CD4-positive, alpha-beta memory T cell (primary cell): ENCODE measurements at regions of chr19 and their contacts with region 1.

Region 1: DNA sequence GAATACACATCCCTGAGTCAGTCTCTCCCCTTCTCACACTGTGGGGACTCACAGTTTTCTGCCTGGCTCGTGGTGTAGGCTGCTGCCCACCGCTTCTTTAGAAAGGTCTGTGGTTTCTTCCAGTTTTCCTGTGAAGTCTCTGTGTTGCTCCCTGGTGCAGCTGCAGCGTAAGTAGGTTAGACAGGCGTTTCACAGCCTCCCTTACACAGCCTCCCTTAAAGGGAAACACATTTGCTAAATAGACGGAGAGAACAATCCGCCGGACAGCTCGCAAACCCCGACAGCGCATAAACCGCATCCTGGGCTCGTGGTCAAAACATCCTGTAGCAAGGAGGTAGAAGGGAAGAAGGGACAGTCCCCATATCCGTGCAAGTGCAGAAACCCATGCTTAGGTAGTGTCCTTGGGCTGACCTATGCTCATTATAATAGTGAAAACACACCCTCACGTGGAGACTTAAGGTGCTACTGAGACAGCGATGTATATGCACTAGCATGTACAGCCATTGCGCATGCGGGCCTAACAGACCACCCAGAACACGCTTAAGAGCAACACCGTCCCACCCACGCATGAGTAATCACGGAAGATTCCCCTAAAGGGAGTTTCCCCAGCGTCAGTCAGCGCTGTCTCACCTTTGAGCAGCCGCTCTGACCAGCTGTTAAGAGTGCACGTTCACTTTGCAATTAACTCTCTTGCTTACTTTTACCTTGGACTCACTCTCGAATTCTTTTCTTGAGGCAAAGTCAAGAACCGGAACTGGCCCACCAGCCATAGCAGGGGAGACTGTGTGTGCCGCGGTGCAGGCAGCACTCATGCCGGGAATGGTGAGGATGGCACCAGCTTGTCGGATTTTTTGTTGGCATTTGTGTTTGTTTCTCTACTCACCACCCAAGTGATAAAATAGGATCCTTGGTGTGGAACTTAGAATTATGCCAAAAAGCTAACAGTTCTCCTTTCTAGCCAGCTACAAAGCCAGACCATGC is 16.6 kb downstream of the SIGLEC8 start:
- DNase-seq: peak; percentile 81 to 95 (median 85)
- H3K4me3 ChIP-seq: peak overlapping the region; percentile 17 to 36
- H3K4me3 Mint-ChIP-seq: peak overlapping the region; percentile 73 to 91 (median 84)
- H3K27ac ChIP-seq: peak overlapping the region; percentile 70
- H3K27ac Mint-ChIP-seq: peak overlapping the region; percentile 85 to 98 (median 94)
- H3K4me1 ChIP-seq: peaks cover 47% of the 10 kb centered on the region
- H3K4me1 Mint-ChIP-seq: peaks cover 24 to 48% (median 36%) of the 10 kb centered on the region in 4 donors
- H3K27me3 ChIP-seq: no peaks in the 10 kb centered on the region
- H3K27me3 Mint-ChIP-seq: peaks cover 3 to 5% of the 10 kb centered on the region in 2 donors

Region 2: DNA sequence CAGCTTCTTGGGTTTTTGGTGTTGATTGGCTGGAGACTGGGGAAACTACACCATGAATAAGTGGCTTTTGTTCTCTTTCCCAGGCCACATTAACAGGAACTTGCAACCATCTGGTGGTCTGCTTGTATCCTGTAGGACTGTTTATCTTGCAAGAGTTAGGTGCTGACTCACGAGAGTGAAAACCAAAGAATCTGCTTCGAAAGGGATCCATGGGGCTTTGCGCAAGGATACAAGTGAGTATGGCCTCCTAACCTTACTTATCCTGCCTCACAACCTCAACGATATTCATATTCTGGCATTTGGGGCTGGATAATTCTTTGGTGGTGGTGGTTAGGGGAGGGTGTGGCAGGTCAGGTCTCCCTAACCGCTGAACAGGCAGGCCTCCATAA is 195.5 kb before region 1 on chr19:
- CTCF ChIA-PET with region 1: no interaction called
- POLR2A ChIA-PET with region 1: no interaction called
- intact Hi-C with region 1: no loop called
- DNase-seq: no peak
- H3K4me3 ChIP-seq: no peak overlapping the region
- H3K4me3 Mint-ChIP-seq: no peak overlapping the region
- H3K27ac ChIP-seq: no peak overlapping the region
- H3K27ac Mint-ChIP-seq: no peak overlapping the region
- H3K4me1 ChIP-seq: no peaks in the 10 kb centered on the region
- H3K4me1 Mint-ChIP-seq: peaks cover 0 to 5% (median 1%) of the 10 kb centered on the region in 4 donors
- H3K27me3 ChIP-seq: no peaks in the 10 kb centered on the region
- H3K27me3 Mint-ChIP-seq: peaks cover 12 to 19% of the 10 kb centered on the region in 2 donors

Region 3: DNA sequence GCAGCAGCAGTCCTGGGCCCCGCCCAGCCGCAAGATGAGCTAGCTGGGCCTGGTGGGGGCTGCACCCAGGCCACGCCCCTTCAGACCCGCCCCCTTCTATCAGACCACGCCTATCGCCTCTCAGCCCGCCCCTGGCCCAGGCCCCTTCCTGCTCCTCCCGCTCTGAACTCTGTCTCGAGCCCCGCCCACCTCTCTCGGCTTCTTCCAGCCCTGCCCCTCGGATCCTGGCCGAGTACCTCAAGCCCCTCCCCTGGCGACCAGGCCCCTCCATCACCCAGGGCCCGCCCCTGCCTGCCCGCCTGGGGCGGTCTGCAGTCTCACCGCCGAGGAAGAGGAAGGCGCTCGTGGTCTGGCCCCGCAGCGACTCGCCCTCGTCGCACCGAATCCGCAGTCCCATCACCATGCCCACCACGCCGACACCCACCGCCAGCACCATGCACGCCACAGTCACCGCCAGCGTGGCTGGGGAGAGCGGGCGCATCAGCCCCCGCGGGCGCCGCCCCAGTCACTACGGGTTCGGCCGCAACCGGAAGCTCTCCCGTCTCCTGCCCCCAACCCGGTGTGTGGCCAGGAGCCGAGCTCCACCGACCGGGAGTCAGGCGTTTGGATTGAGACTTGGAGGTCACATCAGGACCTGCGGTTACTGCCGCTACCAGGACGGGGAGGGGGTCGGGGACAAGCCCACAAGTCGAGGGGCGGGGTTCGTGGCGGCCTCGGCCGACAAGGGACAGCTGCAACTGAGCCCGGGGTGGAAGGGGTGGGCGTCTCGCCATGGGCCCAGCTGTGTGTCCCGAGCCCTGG is 73.9 kb before region 1 on chr19:
- CTCF ChIA-PET with region 1: interaction called, 3 read pairs
- POLR2A ChIA-PET with region 1: interaction called, 10 read pairs
- intact Hi-C with region 1: loop called (anchors 1 kb)
- DNase-seq: peak; percentile 89 to 95 (median 91)
- H3K4me3 ChIP-seq: peak overlapping the region; percentile 83 to 85
- H3K4me3 Mint-ChIP-seq: peak overlapping the region; percentile 92 to 100 (median 98)
- H3K27ac ChIP-seq: peak overlapping the region; percentile 77
- H3K27ac Mint-ChIP-seq: peak overlapping the region; percentile 87 to 98 (median 96)
- H3K4me1 ChIP-seq: peaks cover 67% of the 10 kb centered on the region
- H3K4me1 Mint-ChIP-seq: peaks cover 49 to 88% (median 64%) of the 10 kb centered on the region in 4 donors
- H3K27me3 ChIP-seq: no peaks in the 10 kb centered on the region
- H3K27me3 Mint-ChIP-seq: no peaks in the 10 kb centered on the region

Region 4: DNA sequence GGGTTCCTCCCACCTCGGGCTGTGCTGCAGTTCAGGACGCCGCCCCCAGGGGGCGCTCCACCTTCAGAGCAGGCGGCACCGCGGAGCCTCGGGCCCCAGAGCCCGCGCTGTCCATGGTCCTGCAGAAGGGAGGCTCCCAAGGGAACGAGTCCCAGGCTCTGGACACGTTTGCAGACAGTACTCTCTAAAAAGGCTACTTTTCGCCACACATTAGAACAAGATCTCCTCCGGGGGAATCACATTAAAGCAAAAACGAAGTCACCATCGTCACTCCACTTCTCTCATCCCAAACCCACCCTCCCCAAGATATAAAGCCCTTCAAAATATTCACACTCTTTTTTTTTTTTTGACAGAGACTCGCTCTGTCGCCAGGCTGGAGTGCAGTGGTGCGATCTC is 19.6 kb before region 1 on chr19:
- CTCF ChIA-PET with region 1: interaction called, 84 read pairs
- POLR2A ChIA-PET with region 1: interaction called, 11 read pairs
- intact Hi-C with region 1: loop called (anchors 1 kb)
- DNase-seq: peak; percentile 67 to 75 (median 69)
- H3K4me3 ChIP-seq: no peak overlapping the region
- H3K4me3 Mint-ChIP-seq: no peak overlapping the region
- H3K27ac ChIP-seq: no peak overlapping the region
- H3K27ac Mint-ChIP-seq: peak overlapping the region in 1 of 7 donors; percentile 24
- H3K4me1 ChIP-seq: no peaks in the 10 kb centered on the region
- H3K4me1 Mint-ChIP-seq: peaks cover 0 to 8% (median 3%) of the 10 kb centered on the region in 4 donors
- H3K27me3 ChIP-seq: no peaks in the 10 kb centered on the region
- H3K27me3 Mint-ChIP-seq: peaks cover 8 to 18% of the 10 kb centered on the region in 2 donors

Region 5: GRCh38 chr19:51460164-51460992 is 18.7 kb after region 1 on chr19:
- CTCF ChIA-PET with region 1: no interaction called
- POLR2A ChIA-PET with region 1: no interaction called
- intact Hi-C with region 1: no loop called
- DNase-seq: no peak
- H3K4me3 ChIP-seq: no peak overlapping the region
- H3K4me3 Mint-ChIP-seq: no peak overlapping the region
- H3K27ac ChIP-seq: no peak overlapping the region
- H3K27ac Mint-ChIP-seq: no peak overlapping the region
- H3K4me1 ChIP-seq: no peaks in the 10 kb centered on the region
- H3K4me1 Mint-ChIP-seq: peaks cover 2 to 18% (median 5%) of the 10 kb centered on the region in 4 donors
- H3K27me3 ChIP-seq: peaks cover 10% of the 10 kb centered on the region
- H3K27me3 Mint-ChIP-seq: peaks cover 12 to 32% of the 10 kb centered on the region in 2 donors